ENCODE measurements at regions of chr10 and their contacts with region 1.

Region 1: GRCh38 chr10:21495752-21496342 is 29.6 kb downstream of the SKIDA1 start:
- DNase-seq: peak; percentile 95
- CTCF ChIP-seq: peak; percentile 93

Region 2: DNA sequence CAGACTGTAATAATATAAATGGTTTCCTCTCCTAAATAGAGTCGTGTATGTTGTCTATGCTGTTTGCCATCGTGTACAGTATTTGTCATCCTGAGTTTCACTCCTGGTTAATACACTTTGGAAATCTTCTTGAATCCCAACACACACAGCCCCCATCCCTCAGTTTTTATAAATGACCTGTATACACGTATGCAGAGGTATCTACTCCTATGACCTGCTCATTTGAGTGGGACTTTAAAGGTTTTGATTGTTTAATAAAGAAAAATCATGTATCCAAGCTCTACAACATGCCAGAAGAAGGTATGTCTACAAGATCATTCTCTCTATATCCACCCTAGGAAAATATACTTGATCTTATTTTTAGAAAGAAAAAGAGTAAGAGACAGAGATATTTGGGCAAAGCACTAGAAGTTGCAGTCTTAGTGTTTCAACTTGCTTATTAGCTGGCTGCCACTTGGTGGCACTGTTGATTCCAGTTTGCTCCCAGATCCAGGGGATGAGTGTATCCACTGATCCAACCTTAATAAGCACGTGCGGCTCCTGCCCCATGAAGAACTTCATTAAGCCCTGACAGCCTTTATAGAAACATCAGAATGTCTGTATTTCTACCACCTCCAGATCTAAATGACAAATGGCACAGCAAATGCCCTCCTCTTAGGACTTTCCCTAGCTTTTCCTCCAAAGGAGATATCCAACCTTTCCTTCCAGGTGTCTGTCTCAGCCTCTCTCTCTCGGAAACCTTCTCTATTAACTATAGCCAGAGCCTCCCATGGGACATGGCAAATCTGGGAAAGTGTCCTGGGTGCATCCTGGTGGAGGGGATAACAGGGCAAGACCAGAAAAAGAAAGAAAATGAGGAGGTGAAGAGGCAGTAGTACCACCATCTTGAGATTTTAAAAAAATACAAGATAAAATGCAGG is 417.2 kb before region 1 on chr10:
- in situ Hi-C with region 1: loop called (anchors 25 kb)
- DNase-seq: peak; percentile 18
- CTCF ChIP-seq: peak; percentile 56

Region 3: GRCh38 chr10:21626457-21627161 is 130.8 kb after region 1 on chr10:
- in situ Hi-C with region 1: no loop called
- DNase-seq: no peak
- CTCF ChIP-seq: no peak

Region 4: GRCh38 chr10:21724695-21725367 is 229.0 kb after region 1 on chr10:
- in situ Hi-C with region 1: loop called (anchors 10 kb)
- DNase-seq: peak; percentile 58
- CTCF ChIP-seq: no peak

Region 5: GRCh38 chr10:21849607-21850006 is 353.8 kb after region 1 on chr10:
- in situ Hi-C with region 1: no loop called
- DNase-seq: no peak
- CTCF ChIP-seq: no peak

Measured in GM13976 (cell line).